Naive thymus-derived CD8-positive, alpha-beta T cell (primary cell): ENCODE measurements at regions of chr1 and their contacts with region 1.

Region 1: GRCh38 chr1:226642876-226643576 is 94.5 kb downstream of the STUM start:
- DNase-seq: peak in 4 of 10 donors; percentile 25 to 64 (median 52)
- ATAC-seq: peak; percentile 52 to 69
- H3K4me3 Mint-ChIP-seq: peak overlapping the region; percentile 53 to 86 (median 74)
- H3K27ac Mint-ChIP-seq: peak overlapping the region in 9 of 10 donors; percentile 88 to 97 (median 93)
- H3K4me1 Mint-ChIP-seq: peaks cover 28 to 70% (median 67%) of the 10 kb centered on the region in 4 donors
- H3K27me3 Mint-ChIP-seq: no peaks in the 10 kb centered on the region

Region 2: DNA sequence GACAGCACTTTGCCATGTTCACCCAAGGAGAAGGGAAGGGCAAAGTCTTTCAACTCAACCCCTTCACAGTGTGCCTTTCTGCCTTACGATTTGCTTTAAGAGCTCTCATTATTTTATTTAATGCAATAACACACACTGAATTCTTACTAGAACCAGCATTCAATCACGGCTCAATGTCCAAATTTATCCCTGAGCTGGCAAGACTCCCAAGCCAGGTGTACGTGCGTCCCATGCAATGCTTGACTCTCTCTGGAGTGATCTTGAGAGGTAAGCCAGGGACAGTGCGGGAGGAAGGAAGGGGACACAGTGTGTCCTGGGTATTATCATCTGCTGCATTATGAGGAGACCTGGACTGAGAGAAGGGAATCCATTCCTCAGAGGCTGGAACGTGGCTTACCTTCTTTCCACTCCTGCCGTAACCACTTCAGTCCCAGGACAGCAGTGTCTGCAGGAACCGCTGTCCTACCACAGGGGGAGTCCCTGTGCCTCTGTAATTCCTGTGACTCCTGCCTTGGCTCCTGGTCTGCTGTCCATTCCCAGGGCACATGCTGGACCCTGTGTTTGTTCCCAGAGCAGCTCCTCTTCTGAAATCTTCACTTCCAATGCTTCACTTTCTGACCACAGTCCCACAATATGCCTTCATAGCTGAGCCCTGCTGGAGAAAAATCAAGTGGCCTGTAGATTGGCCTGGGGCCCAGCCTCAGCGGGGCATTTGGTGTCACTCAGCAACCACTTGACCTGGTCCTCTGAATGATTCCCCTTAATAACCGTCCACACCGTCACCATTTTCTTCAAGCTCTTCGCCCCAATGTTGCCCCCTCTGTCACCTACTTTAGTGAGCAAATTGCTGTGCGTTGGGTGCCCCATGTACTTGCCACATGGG is 123.1 kb before region 1 on chr1:
- POLR2A ChIA-PET with region 1: no interaction called
- DNase-seq: no peak
- ATAC-seq: no peak
- H3K4me3 Mint-ChIP-seq: no peak overlapping the region
- H3K27ac Mint-ChIP-seq: no peak overlapping the region
- H3K4me1 Mint-ChIP-seq: peaks cover 0 to 9% (median 0%) of the 10 kb centered on the region in 4 donors
- H3K27me3 Mint-ChIP-seq: peaks cover 0 to 11% (median 2%) of the 10 kb centered on the region in 5 donors

Region 3: GRCh38 chr1:226575739-226576378 is 67.2 kb before region 1 on chr1:
- POLR2A ChIA-PET with region 1: no interaction called
- DNase-seq: no peak
- ATAC-seq: no peak
- H3K4me3 Mint-ChIP-seq: no peak overlapping the region
- H3K27ac Mint-ChIP-seq: no peak overlapping the region
- H3K4me1 Mint-ChIP-seq: no peaks in the 10 kb centered on the region
- H3K27me3 Mint-ChIP-seq: peaks cover 0 to 8% (median 0%) of the 10 kb centered on the region in 5 donors

Region 4: GRCh38 chr1:226656601-226657277 is 13.7 kb after region 1 on chr1:
- POLR2A ChIA-PET with region 1: interaction called, 613 read pairs
- DNase-seq: peak in 9 of 10 donors; percentile 57 to 88 (median 84)
- ATAC-seq: peak; percentile 64 to 78
- H3K4me3 Mint-ChIP-seq: peak overlapping the region in 9 of 10 donors; percentile 47 to 92 (median 74)
- H3K27ac Mint-ChIP-seq: no peak overlapping the region
- H3K4me1 Mint-ChIP-seq: peaks cover 0 to 50% (median 0%) of the 10 kb centered on the region in 4 donors
- H3K27me3 Mint-ChIP-seq: no peaks in the 10 kb centered on the region